ENCODE measurements at regions of chr11 and their contacts with region 1.

Region 1: GRCh38 chr11:64688534-64688982 is 34.4 kb downstream of the NRXN2 start:
- DNase-seq: peak; percentile 90 to 95
- H3K4me3 ChIP-seq: peak overlapping the region; percentile 44
- H3K4me3 Mint-ChIP-seq: peak overlapping the region; percentile 68
- H3K27ac Mint-ChIP-seq: no peak overlapping the region
- H3K4me1 ChIP-seq: no peaks in the 10 kb centered on the region
- H3K4me1 Mint-ChIP-seq: peaks cover 8% of the 10 kb centered on the region
- H3K27me3 ChIP-seq: peaks cover 2% of the 10 kb centered on the region
- H3K27me3 Mint-ChIP-seq: peaks cover 20% of the 10 kb centered on the region
- CTCF ChIP-seq: peak; percentile 94

Region 2: GRCh38 chr11:64705501-64705900 is 16.9 kb after region 1 on chr11:
- CTCF ChIA-PET with region 1: interaction called, 27 read pairs
- POLR2A ChIA-PET with region 1: no interaction called
- intact Hi-C with region 1: loop called (anchors 1 kb)
- DNase-seq: no peak
- H3K4me3 ChIP-seq: no peak overlapping the region
- H3K4me3 Mint-ChIP-seq: no peak overlapping the region
- H3K27ac Mint-ChIP-seq: no peak overlapping the region
- H3K4me1 ChIP-seq: no peaks in the 10 kb centered on the region
- H3K4me1 Mint-ChIP-seq: peaks cover 8% of the 10 kb centered on the region
- H3K27me3 ChIP-seq: no peaks in the 10 kb centered on the region
- H3K27me3 Mint-ChIP-seq: peaks cover 7% of the 10 kb centered on the region
- CTCF ChIP-seq: no peak

Region 3: GRCh38 chr11:64723117-64723906 is 34.8 kb after region 1 on chr11 and contains the start of gene NRXN2:
- CTCF ChIA-PET with region 1: interaction called, 5 read pairs
- POLR2A ChIA-PET with region 1: no interaction called
- intact Hi-C with region 1: loop called (anchors 1 kb)
- DNase-seq: peak; percentile 86 to 90
- H3K4me3 ChIP-seq: peak within 1 kb of the TSS; percentile 74
- H3K4me3 Mint-ChIP-seq: peak within 1 kb of the TSS; percentile 62
- H3K27ac Mint-ChIP-seq: no peak within 1 kb of the TSS
- H3K4me1 ChIP-seq: peaks cover 24% of the 10 kb centered on the region
- H3K4me1 Mint-ChIP-seq: peaks cover 12% of the 10 kb centered on the region
- H3K27me3 ChIP-seq: peaks cover 5% of the 10 kb centered on the region; the same call in 1 of the 2 replicates
- H3K27me3 Mint-ChIP-seq: peaks cover 16% of the 10 kb centered on the region
- CTCF ChIP-seq: peak; percentile 93 to 96
- total RNA-seq, gene NRXN2: 6.5 and 7.6 TPM in 2 replicates

Region 4: GRCh38 chr11:64742889-64743590 is 54.5 kb after region 1 on chr11:
- CTCF ChIA-PET with region 1: interaction called, 11 read pairs
- POLR2A ChIA-PET with region 1: no interaction called
- intact Hi-C with region 1: loop called (anchors 1 kb)
- DNase-seq: peak; percentile 68 to 91
- H3K4me3 ChIP-seq: peak overlapping the region; percentile 59
- H3K4me3 Mint-ChIP-seq: peak overlapping the region; percentile 69
- H3K27ac Mint-ChIP-seq: no peak overlapping the region
- H3K4me1 ChIP-seq: peaks cover 38% of the 10 kb centered on the region
- H3K4me1 Mint-ChIP-seq: peaks cover 9% of the 10 kb centered on the region
- H3K27me3 ChIP-seq: no peaks in the 10 kb centered on the region
- H3K27me3 Mint-ChIP-seq: peaks cover 6% of the 10 kb centered on the region
- CTCF ChIP-seq: peak; percentile 87 to 95

Region 5: DNA sequence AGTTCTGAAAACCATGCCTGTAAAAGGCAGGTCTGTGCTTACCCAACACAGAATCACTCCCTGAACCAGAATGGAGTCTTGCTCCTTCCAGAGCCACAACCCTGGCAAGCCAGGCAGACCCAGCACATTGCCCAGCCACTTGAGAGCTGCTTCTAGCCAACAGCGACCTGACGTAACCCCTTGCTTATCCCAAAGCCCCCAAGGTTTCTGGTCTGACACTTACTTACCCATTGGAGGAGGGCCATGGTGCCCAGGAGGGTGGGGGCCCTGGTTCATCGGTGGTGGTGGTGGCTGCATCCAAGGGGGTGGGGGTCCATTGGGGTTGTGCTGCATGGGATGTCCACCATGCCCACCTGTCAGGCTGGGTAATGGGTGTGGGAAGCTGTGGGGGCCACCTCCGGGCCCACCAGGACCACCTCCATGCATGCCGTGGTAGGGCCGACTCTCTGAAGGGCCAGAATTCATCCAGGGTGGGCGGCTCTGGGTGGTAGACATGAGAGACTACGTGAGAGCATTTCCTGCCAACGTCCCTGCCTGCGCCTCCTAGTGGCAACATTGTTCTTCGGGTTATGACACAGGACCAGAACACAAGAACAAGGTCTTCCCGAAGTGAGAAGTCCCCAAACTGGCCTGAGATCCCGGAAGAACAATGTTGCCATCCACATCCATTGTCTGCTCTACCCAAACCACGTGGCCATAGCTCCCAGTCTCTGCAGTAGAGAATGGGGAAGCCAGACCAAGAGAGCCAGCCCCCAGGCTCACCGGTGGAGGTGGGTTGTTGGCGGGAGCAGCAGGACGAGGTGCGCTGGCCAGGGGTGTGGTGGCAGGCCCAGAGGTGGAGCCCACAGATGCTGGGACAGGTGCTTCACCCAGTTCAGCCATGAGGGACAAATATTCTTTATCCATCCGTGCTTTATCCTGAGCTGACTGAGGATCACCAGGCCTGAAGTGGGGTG is 79.1 kb after region 1 on chr11:
- CTCF ChIA-PET with region 1: no interaction called
- POLR2A ChIA-PET with region 1: no interaction called
- intact Hi-C with region 1: loop called (anchors 2 kb)
- DNase-seq: peak; percentile 76 to 83
- H3K4me3 ChIP-seq: no peak overlapping the region
- H3K4me3 Mint-ChIP-seq: no peak overlapping the region
- H3K27ac Mint-ChIP-seq: no peak overlapping the region
- H3K4me1 ChIP-seq: no peaks in the 10 kb centered on the region
- H3K4me1 Mint-ChIP-seq: no peaks in the 10 kb centered on the region
- H3K27me3 ChIP-seq: no peaks in the 10 kb centered on the region
- H3K27me3 Mint-ChIP-seq: no peaks in the 10 kb centered on the region
- CTCF ChIP-seq: peak; percentile 71 to 80

Measured in Caco-2 (cell line).